Left cardiac atrium (tissue), 4 donors: ENCODE measurements at regions of chr15 and their contacts with region 1.

Region 1: GRCh38 chr15:20367093-20367492 is 174.5 kb downstream of the GOLGA6L6 start:
- DNase-seq: no peak
- ATAC-seq: no peak

Region 2: DNA sequence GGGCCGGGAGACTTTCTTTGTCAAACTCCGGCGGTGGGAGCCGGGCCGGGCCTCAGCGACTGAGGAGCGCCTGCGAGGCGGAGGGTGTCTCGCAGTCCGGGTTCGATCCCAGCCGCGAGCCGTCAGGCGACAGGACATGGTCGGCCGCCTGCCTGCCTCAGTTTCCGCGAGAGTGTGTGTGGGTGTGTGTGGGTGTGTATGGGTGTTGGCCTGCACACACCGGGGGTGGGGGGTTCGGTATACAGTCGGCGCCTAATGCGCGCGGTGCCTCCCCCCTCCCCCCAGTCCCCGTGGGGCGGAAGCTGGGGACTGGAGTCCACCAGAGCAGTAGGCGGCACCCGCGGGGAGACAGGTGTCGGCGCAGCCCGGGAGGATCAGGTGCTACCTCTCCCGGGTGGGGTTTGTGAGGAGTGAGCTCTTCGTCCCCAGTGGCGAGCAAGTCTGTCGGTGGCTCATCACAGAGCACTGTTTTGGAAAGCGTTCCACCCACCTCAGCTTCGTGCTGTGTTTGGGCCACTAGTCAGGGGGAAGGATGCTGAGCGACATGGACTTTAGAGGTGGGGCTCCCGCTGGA is 71.8 kb before region 1 on chr15:
- intact Hi-C with region 1: no loop called
- DNase-seq: no peak
- ATAC-seq: no peak

Region 3: DNA sequence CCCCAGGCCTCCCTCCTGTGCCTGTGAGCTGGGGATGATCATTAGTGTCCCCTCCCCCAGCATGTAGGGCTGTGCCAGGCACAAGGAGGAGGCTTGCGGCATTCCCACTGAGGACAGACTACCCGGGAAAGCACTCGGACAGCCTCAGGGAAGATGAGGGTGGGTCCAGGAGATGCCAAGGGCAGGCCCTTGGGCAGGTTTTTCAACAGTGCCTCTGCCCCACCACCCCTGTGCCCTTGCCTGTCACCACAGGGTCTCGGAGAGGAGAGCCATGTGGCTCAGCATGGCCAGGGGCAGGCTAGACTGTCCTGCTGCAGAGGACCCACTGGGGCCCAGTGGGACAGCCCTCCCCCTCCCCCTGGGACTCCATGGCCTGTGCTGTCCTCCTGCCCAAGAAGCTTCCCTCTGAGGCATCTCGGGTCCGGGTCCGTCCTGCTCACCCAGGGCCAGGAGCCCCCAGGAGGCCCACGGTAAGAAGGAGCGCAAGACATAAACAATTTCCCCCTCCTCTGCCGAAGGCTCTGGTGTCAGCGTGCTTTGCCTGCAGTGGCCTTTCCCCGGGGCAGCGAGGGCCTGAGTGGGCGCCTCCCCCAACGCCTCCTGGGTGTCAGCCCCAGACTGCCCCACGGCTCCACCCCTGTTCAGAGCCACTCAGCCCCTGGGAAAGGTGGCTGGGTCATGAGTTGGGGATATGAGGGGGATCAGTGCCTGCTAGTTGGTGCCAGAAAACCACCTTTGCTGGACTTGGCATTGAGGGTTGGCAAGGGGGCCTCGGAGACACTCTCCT is 17.9 kb before region 1 on chr15:
- intact Hi-C with region 1: loop called in 1 of 2 experiments (anchors 2 kb)
- DNase-seq: peak; percentile 26
- ATAC-seq: peak in 1 of 2 donors; percentile 2

Region 4: DNA sequence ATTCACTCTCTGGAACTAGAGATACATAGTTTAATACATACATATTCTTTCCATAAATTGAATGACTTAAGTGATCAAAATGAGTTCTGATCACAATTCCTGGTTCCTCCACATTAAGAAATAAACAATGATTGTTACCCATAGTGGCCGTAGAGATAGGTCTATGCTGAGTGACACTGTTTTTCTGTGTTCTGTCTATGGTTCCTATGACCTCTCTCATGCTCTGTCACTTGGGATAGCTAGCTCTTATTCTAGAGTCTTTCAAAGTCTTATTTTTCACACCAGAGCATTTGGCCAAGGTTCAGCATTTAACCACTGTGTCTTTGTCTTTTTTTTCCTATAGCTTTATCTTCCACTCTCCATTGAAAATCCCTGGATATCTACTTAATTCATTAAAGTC is 42.2 kb after region 1 on chr15:
- intact Hi-C with region 1: no loop called
- DNase-seq: no peak
- ATAC-seq: no peak